PC-9 (cell line): ENCODE measurements at regions of chr3 and their contacts with region 1.

Region 1: GRCh38 chr3:197906023-197906849 is 43.8 kb upstream of the RPL35A start:
- DNase-seq: peak; percentile 96 to 97
- H3K4me3 ChIP-seq: no peak overlapping the region; the same call in 1 of the 2 replicates
- H3K27ac ChIP-seq: peak overlapping the region; percentile 64
- H3K4me1 ChIP-seq: peaks cover 18% of the 10 kb centered on the region
- H3K27me3 ChIP-seq: no peaks in the 10 kb centered on the region
- CTCF ChIP-seq: peak; percentile 100

Region 2: GRCh38 chr3:197168606-197169005 is 737.6 kb before region 1 on chr3:
- CTCF ChIA-PET with region 1: no interaction called
- POLR2A ChIA-PET with region 1: no interaction called
- intact Hi-C with region 1: no loop called
- DNase-seq: no peak
- H3K4me3 ChIP-seq: no peak overlapping the region
- H3K27ac ChIP-seq: no peak overlapping the region
- H3K4me1 ChIP-seq: no peaks in the 10 kb centered on the region
- H3K27me3 ChIP-seq: no peaks in the 10 kb centered on the region
- CTCF ChIP-seq: no peak

Region 3: GRCh38 chr3:197667978-197668377 is 238.3 kb before region 1 on chr3:
- CTCF ChIA-PET with region 1: no interaction called
- POLR2A ChIA-PET with region 1: no interaction called
- intact Hi-C with region 1: no loop called
- DNase-seq: peak in 1 of 2 experiments; percentile 34
- H3K4me3 ChIP-seq: no peak overlapping the region
- H3K27ac ChIP-seq: no peak overlapping the region
- H3K4me1 ChIP-seq: no peaks in the 10 kb centered on the region
- H3K27me3 ChIP-seq: no peaks in the 10 kb centered on the region
- CTCF ChIP-seq: no peak

Region 4: GRCh38 chr3:197709135-197709534 is 197.1 kb before region 1 on chr3:
- CTCF ChIA-PET with region 1: no interaction called
- POLR2A ChIA-PET with region 1: no interaction called
- intact Hi-C with region 1: no loop called
- DNase-seq: no peak
- H3K4me3 ChIP-seq: no peak overlapping the region
- H3K27ac ChIP-seq: no peak overlapping the region
- H3K4me1 ChIP-seq: peaks cover 32% of the 10 kb centered on the region
- H3K27me3 ChIP-seq: no peaks in the 10 kb centered on the region
- CTCF ChIP-seq: no peak

Region 5: DNA sequence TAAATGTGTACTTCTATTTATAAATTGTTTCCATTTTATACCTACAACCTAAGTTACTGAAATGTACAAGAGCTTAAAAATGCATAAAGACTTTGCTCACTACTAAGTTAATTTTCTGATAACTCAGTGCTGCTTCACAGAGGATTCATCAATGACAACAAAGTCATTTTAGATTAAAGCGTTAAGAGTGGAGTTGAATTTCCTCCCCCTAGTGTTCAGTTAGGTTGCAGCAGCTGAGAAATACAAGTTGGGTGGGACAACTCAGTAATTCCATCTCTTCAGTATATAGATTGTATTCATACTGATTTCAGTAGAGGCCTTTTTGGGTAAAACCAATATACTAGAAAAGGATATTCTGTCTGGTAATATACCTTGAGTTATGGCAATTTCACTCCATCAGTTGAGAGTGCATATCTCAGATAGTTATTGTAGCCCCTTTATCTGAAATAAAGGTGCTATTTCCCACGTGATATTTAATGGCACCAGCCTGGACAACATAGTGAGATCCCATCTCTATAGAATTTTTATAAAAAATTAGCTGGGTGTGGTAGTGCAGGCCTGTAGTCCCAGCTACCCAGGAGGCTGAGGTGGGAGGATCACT is 36.8 kb after region 1 on chr3:
- CTCF ChIA-PET with region 1: interaction called, 6 read pairs
- POLR2A ChIA-PET with region 1: no interaction called
- intact Hi-C with region 1: loop called (anchors 1 kb)
- DNase-seq: peak in 1 of 2 experiments; percentile 53
- H3K4me3 ChIP-seq: no peak overlapping the region
- H3K27ac ChIP-seq: no peak overlapping the region
- H3K4me1 ChIP-seq: no peaks in the 10 kb centered on the region
- H3K27me3 ChIP-seq: no peaks in the 10 kb centered on the region
- CTCF ChIP-seq: peak; percentile 91

Region 6: DNA sequence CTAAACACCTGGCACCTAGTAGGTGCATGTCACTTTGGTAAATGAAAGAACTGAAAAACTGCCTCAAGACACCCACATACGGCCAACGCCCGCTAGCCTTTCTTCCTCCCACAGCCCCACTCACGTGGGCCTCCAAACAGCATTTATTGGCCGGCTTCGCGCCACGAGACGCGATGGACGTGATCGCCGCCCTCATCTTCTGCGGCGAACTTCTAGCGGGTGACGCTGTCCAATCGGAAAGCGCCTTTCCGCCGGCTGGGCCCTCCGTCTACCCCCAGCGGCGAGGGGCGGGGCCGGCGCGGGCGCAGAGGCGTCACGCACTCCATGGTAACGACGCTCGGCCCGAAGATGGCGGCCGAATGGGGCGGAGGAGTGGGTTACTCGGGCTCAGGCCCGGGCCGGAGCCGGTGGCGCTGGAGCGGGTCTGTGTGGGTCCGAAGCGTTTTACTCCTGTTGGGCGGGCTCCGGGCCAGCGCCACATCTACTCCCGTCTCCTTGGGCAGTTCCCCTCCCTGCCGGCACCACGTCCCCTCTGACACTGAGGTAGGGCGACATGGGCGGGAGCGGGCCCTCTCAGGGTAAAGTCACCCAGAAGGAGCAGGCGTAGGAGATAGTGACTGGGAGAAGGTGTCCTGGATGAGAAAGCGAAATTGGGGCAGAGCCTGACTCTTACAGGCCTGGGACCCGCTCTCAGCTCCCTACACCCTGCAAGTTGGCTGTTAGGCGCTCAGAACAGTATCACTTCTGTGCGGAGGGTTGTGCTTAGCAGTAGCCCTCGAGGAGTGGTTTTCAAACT is 53.9 kb after region 1 on chr3 and contains the start of gene LMLN:
- CTCF ChIA-PET with region 1: no interaction called
- POLR2A ChIA-PET with region 1: no interaction called
- intact Hi-C with region 1: loop called (anchors 1 kb)
- DNase-seq: peak; percentile 94 to 99
- H3K4me3 ChIP-seq: peak within 1 kb of the TSS; percentile 70
- H3K27ac ChIP-seq: peak within 1 kb of the TSS; percentile 57
- H3K4me1 ChIP-seq: peaks cover 49% of the 10 kb centered on the region
- H3K27me3 ChIP-seq: no peaks in the 10 kb centered on the region
- CTCF ChIP-seq: no peak
- total RNA-seq, gene LMLN: 19.8 and 21.1 TPM in 2 replicates

Region 7: DNA sequence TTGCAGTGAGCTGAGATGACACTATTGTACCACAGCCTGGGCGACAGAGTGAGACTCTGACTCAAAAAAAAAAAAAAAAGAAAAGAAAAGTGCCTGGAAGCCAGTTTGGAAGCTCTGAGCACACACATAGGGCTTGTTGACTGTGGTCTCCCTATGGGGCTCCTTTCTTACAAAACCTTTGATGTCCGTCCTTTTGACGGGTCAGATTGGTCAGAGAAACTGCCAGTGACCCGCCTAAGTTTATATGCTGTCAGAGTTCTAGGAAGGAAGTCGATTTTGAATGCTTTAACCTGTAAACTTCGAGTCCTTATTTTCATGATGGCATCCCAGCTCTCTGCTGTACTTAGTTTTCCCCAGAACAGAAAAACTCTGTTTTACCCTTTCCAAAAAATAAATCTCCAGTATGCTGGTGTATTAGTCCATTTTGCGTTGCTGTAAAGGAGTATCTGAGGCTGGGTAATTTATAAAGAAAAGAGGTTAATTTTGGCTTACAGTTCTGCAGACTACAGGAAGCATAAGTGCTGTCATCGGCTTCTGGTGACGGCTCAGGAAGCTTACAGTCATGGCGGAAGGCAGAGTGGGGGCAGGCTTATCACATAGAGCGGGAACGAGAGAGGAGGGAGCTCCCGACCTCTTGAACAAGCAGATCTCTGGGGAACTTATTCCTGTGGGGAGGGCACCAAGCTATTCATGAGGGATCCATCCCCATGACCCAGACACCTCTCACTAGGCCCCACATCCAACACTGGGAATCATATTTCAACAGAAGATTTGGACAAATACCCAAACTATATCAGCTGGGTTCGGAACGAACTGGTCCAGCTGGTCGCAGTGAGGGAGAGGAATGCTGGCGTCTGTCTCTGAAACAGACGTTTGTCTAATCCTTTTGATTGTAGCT is 126.1 kb after region 1 on chr3:
- CTCF ChIA-PET with region 1: no interaction called
- POLR2A ChIA-PET with region 1: no interaction called
- intact Hi-C with region 1: loop called (anchors 5 kb)
- DNase-seq: no peak
- H3K4me3 ChIP-seq: no peak overlapping the region
- H3K27ac ChIP-seq: no peak overlapping the region
- H3K4me1 ChIP-seq: no peaks in the 10 kb centered on the region; the same call in 1 of the 2 replicates
- H3K27me3 ChIP-seq: no peaks in the 10 kb centered on the region
- CTCF ChIP-seq: no peak

Region 8: GRCh38 chr3:198080521-198081280 is 174.5 kb after region 1 on chr3:
- CTCF ChIA-PET with region 1: interaction called, 3 read pairs
- POLR2A ChIA-PET with region 1: no interaction called
- intact Hi-C with region 1: loop called (anchors 2 kb)
- DNase-seq: peak; percentile 68 to 93
- H3K4me3 ChIP-seq: peak overlapping the region; percentile 59; the same call in 1 of the 2 replicates
- H3K27ac ChIP-seq: no peak overlapping the region
- H3K4me1 ChIP-seq: 0 out of 2 replicates have a peak, but pooled peaks cover 7% of the 10 kb centered on the region
- H3K27me3 ChIP-seq: peaks cover 21% of the 10 kb centered on the region; the same call in 1 of the 2 replicates
- CTCF ChIP-seq: peak; percentile 72

Region 9: GRCh38 chr3:198088421-198088955 is 182.3 kb after region 1 on chr3:
- CTCF ChIA-PET with region 1: interaction called, 3 read pairs
- POLR2A ChIA-PET with region 1: no interaction called
- intact Hi-C with region 1: loop called (anchors 2 kb)
- DNase-seq: no peak
- H3K4me3 ChIP-seq: no peak overlapping the region
- H3K27ac ChIP-seq: no peak overlapping the region
- H3K4me1 ChIP-seq: no peaks in the 10 kb centered on the region
- H3K27me3 ChIP-seq: peaks cover 13% of the 10 kb centered on the region; the same call in 1 of the 2 replicates
- CTCF ChIP-seq: no peak

Region 10: GRCh38 chr3:198113206-198114053 is 207.2 kb after region 1 on chr3:
- CTCF ChIA-PET with region 1: no interaction called
- POLR2A ChIA-PET with region 1: no interaction called
- intact Hi-C with region 1: no loop called
- DNase-seq: no peak
- H3K4me3 ChIP-seq: no peak overlapping the region
- H3K27ac ChIP-seq: no peak overlapping the region
- H3K4me1 ChIP-seq: no peaks in the 10 kb centered on the region
- H3K27me3 ChIP-seq: peaks cover 8% of the 10 kb centered on the region
- CTCF ChIP-seq: no peak